ENCODE measurements at regions of chr3 and their contacts with region 1.

Region 1: DNA sequence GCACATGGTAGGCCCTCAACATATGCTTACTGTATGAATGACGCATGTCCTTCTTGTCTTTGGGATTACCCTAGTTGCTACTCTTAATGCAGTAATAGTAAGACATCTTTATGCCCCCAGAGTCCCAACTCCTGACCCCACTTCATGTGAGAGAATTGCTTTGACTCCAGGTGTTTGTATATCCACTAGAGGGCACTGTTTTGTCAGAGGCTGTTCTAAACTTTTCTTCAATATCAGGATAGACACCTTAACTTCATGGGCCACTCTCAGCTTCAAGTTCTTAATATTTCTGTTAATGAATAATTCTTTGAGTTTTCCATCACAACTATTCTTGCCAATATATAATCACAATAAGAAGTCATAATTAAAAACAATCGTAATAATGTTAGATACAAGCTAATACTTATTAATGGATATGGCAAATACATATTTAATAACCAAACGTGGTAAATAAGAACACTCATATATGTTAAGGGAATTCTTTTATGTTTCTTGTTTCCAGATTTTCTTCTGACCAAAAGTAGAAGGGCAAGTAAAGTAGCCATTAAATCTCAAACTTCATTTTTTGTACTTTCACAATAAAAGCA is 337.2 kb upstream of the DNAJC19 start:
- DNase-seq: peak; percentile 46
- H3K4me3 Mint-ChIP-seq: no peak overlapping the region
- H3K27ac Mint-ChIP-seq: no peak overlapping the region
- H3K4me1 Mint-ChIP-seq: no peaks in the 10 kb centered on the region
- H3K27me3 Mint-ChIP-seq: peaks cover 18% of the 10 kb centered on the region
- CTCF ChIP-seq: peak; percentile 66

Region 2: DNA sequence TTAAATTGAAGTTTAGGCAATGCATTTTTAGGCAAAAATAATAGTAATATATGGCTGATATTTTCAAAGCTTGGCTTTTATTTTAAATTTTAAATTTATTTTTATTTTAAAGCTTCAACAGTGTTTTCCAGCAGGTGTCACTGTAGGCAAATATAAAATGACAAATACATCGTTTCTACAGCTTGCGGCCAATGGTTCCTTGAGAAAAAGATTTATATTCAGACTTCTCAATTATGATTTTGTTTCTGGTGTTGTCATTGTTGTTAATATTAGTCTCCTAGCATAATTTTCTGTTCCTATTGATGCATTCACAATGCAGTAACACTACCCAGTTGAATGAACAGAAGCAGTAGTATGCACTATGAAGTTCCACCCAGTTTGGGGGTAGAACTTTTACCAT is 116.5 kb before region 1 on chr3:
- CTCF ChIA-PET with region 1: interaction called, 15 read pairs
- POLR2A ChIA-PET with region 1: no interaction called
- intact Hi-C with region 1: loop called (anchors 10 kb)
- DNase-seq: peak; percentile 42
- H3K4me3 Mint-ChIP-seq: no peak overlapping the region
- H3K27ac Mint-ChIP-seq: no peak overlapping the region
- H3K4me1 Mint-ChIP-seq: no peaks in the 10 kb centered on the region
- H3K27me3 Mint-ChIP-seq: no peaks in the 10 kb centered on the region
- CTCF ChIP-seq: peak; percentile 55

Region 3: DNA sequence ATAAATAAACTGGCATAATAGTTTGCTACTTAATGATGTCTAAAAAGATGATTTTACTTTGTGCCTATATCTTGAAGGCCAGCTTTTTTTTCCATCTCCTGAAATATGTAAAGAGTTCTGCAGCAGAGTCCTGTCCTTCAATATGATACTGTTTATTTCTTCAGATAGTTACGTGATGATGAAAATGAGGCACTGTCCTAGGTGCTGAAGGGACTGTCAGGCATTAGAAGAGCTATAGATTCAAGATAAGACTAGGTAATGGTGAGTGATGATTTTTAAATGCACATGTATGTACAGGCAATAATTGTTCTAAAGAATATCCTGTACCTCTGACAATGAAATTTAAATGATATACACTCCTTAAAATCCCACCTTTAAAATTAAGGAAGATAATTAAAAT is 10.2 kb before region 1 on chr3:
- CTCF ChIA-PET with region 1: interaction called, 23 read pairs
- POLR2A ChIA-PET with region 1: no interaction called
- intact Hi-C with region 1: no loop called
- DNase-seq: peak; percentile 62
- H3K4me3 Mint-ChIP-seq: no peak overlapping the region
- H3K27ac Mint-ChIP-seq: no peak overlapping the region
- H3K4me1 Mint-ChIP-seq: no peaks in the 10 kb centered on the region
- H3K27me3 Mint-ChIP-seq: peaks cover 61% of the 10 kb centered on the region
- CTCF ChIP-seq: no peak

Region 4: DNA sequence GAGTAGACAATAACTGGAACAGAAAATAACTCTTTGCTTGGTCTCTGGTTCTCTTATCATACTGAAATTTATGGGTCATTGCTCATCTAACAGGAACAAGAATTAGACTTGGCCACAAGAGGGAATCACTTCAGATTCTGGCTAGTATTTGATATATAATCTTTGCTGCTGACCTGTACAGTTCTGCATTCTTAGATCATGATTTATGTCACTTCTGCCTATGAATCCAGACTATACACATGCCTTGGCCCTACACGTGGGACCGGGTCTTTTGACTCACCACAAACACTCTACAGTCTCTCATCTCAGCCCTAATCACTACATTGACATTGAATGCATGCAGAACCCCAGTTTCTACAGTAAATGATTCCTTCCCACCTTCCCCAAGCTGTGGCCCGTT is 222.5 kb after region 1 on chr3:
- CTCF ChIA-PET with region 1: interaction called, 3 read pairs
- POLR2A ChIA-PET with region 1: no interaction called
- intact Hi-C with region 1: loop called (anchors 10 kb)
- DNase-seq: no peak
- H3K4me3 Mint-ChIP-seq: no peak overlapping the region
- H3K27ac Mint-ChIP-seq: no peak overlapping the region
- H3K4me1 Mint-ChIP-seq: no peaks in the 10 kb centered on the region
- H3K27me3 Mint-ChIP-seq: no peaks in the 10 kb centered on the region
- CTCF ChIP-seq: no peak

Region 5: DNA sequence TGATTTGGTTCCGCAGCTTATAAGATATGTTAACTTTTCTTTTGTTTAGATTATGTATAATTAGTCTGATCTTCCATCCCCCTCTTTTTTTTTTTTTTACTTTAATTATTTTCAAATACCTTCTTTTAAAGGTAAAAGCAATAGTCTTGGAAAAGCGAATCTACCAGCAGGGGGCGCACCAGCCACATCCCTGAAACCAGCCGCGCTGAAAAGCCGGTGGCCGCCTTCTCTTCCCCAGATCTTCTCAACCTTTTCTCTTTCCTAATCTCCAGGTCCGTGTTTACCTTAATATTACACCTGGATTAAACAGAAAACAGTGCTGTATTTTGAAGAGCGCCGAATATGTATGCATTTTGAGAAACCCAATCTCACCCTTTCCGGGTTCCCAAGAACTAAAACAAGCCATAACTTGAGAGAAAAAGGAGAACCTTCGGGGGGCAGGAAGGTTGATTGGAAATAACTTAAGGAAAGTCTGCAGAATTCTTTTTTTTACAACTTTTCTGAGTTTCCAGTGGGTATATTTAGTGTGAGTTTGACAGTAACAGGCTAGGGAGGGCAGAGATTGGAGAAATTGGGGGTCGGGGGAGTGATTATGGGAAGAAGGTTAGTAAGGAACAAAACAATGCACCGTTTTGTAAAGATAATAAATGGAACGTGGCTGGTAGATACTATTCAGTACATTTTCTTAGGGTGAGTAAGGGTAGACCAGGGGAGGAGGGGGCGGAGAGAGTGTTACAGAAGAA is 383.0 kb after region 1 on chr3:
- CTCF ChIA-PET with region 1: interaction called, 19 read pairs
- POLR2A ChIA-PET with region 1: no interaction called
- intact Hi-C with region 1: no loop called
- DNase-seq: peak; percentile 75
- H3K4me3 Mint-ChIP-seq: peak overlapping the region; percentile 59
- H3K27ac Mint-ChIP-seq: no peak overlapping the region
- H3K4me1 Mint-ChIP-seq: peaks cover 8% of the 10 kb centered on the region
- H3K27me3 Mint-ChIP-seq: no peaks in the 10 kb centered on the region
- CTCF ChIP-seq: peak; percentile 59

Region 6: GRCh38 chr3:182618085-182618732 is 1291.5 kb after region 1 on chr3:
- CTCF ChIA-PET with region 1: no interaction called
- POLR2A ChIA-PET with region 1: no interaction called
- intact Hi-C with region 1: loop called (anchors 5 kb)
- DNase-seq: peak; percentile 47
- H3K4me3 Mint-ChIP-seq: no peak overlapping the region
- H3K27ac Mint-ChIP-seq: peak overlapping the region; percentile 15
- H3K4me1 Mint-ChIP-seq: peaks cover 30% of the 10 kb centered on the region
- H3K27me3 Mint-ChIP-seq: no peaks in the 10 kb centered on the region
- CTCF ChIP-seq: peak; percentile 51